ENCODE measurements at regions of chr3 and their contacts with region 1.

Region 1: DNA sequence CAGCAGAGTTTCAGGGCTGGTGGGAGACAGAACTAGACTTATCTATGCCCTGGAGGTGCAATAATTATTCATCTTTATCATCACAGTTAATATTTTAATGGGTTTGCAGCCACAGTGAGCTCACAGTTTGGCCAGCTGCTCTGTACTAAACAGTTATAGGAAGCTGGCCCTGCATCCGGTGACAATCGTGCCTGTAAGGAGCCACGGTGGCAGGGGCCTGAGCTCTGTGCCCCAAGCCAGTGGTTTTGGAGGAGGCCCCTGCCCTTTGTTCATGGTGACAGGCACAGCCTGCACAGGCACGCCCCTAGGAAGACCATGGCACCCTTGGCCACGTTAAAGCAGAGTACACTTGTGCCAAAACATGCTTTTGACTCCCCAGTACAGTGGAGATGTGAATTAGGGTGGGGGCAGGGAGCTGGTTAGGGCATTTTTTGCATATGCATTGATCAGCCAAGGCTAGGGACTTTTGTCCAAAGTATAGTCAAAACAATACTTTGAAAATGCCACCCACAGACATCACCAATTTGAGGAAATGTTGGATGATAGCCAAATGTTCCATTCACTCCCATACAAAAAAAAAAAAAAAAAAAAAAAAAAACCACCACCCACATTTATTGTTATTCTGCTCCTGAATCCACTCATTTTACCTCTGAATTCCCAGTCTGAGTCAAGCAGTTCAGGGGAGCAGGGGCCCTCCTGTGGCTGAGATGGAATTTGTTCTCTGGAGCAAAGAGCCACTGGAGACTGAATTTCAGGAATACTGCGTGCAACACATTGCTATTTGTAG is 3.4 kb upstream of the RFTN1 start:
- DNase-seq: no peak
- CTCF ChIP-seq: no peak

Region 2: GRCh38 chr3:16504242-16504641 is 12.6 kb before region 1 on chr3:
- CTCF ChIA-PET with region 1: interaction called, 49 read pairs
- POLR2A ChIA-PET with region 1: interaction called, 7 read pairs
- DNase-seq: peak; percentile 63
- CTCF ChIP-seq: no peak

Region 3: GRCh38 chr3:16528106-16528505 is 11.2 kb after region 1 on chr3:
- CTCF ChIA-PET with region 1: interaction called, 27 read pairs
- POLR2A ChIA-PET with region 1: interaction called, 3 read pairs
- DNase-seq: no peak
- CTCF ChIP-seq: no peak

Region 4: GRCh38 chr3:16534640-16535262 is 17.9 kb after region 1 on chr3:
- CTCF ChIA-PET with region 1: interaction called, 40 read pairs
- POLR2A ChIA-PET with region 1: interaction called, 3 read pairs
- DNase-seq: no peak
- CTCF ChIP-seq: no peak

Region 5: GRCh38 chr3:16550676-16551341 is 33.9 kb after region 1 on chr3:
- CTCF ChIA-PET with region 1: interaction called, 11 read pairs
- POLR2A ChIA-PET with region 1: interaction called, 6 read pairs
- DNase-seq: peak; percentile 65
- CTCF ChIP-seq: peak; percentile 90

Measured in GM10248 (cell line).